ENCODE measurements at regions of chr19 and their contacts with region 1.

Region 1: GRCh38 chr19:40425450-40426287 is at the start of gene SERTAD1:
- DNase-seq: peak; percentile 100
- ATAC-seq: peak; percentile 78 to 85
- H3K4me3 ChIP-seq: peak within 1 kb of the TSS; percentile 66
- H3K27ac ChIP-seq: peak within 1 kb of the TSS; percentile 93 to 94
- H3K4me1 ChIP-seq: peaks cover 25% of the 10 kb centered on the region
- CTCF ChIP-seq: peak; percentile 100
- EP300 ChIP-seq: no peak; a peak in 1 of 5 replicates
- POLR2A ChIP-seq: peak; percentile 99
- RAD21 ChIP-seq: peak; percentile 11 to 73; a peak in 4 of 5 replicates
- polyA plus RNA-seq, gene SERTAD1: 10.0 and 10.7 TPM in 2 replicates

Region 2: GRCh38 chr19:39878398-39878797 is 547.3 kb before region 1 on chr19:
- CTCF ChIA-PET with region 1: no interaction called
- POLR2A ChIA-PET with region 1: no interaction called
- DNase-seq: no peak
- ATAC-seq: peak; percentile 11 to 17; a peak in 4 of 6 replicates
- H3K4me3 ChIP-seq: no peak overlapping the region
- H3K27ac ChIP-seq: no peak overlapping the region
- H3K4me1 ChIP-seq: no peaks in the 10 kb centered on the region
- CTCF ChIP-seq: no peak
- EP300 ChIP-seq: no peak
- POLR2A ChIP-seq: no peak
- RAD21 ChIP-seq: no peak

Region 3: GRCh38 chr19:40365613-40366401 is 59.9 kb before region 1 on chr19:
- CTCF ChIA-PET with region 1: interaction called, 15 read pairs
- POLR2A ChIA-PET with region 1: interaction called, 7 read pairs
- DNase-seq: peak; percentile 70 to 96
- ATAC-seq: peak; percentile 72 to 90
- H3K4me3 ChIP-seq: peak overlapping the region; percentile 31
- H3K27ac ChIP-seq: peak overlapping the region; percentile 30 to 78
- H3K4me1 ChIP-seq: peaks cover 16% of the 10 kb centered on the region
- CTCF ChIP-seq: no peak
- EP300 ChIP-seq: no peak
- POLR2A ChIP-seq: peak; percentile 87
- RAD21 ChIP-seq: no peak

Region 4: GRCh38 chr19:40394816-40395210 is 30.9 kb before region 1 on chr19:
- CTCF ChIA-PET with region 1: interaction called, 19 read pairs
- POLR2A ChIA-PET with region 1: interaction called, 8 read pairs
- DNase-seq: no peak
- ATAC-seq: no peak
- H3K4me3 ChIP-seq: no peak overlapping the region
- H3K27ac ChIP-seq: no peak overlapping the region
- H3K4me1 ChIP-seq: no peaks in the 10 kb centered on the region
- CTCF ChIP-seq: no peak
- EP300 ChIP-seq: no peak
- POLR2A ChIP-seq: no peak
- RAD21 ChIP-seq: no peak

Region 5: DNA sequence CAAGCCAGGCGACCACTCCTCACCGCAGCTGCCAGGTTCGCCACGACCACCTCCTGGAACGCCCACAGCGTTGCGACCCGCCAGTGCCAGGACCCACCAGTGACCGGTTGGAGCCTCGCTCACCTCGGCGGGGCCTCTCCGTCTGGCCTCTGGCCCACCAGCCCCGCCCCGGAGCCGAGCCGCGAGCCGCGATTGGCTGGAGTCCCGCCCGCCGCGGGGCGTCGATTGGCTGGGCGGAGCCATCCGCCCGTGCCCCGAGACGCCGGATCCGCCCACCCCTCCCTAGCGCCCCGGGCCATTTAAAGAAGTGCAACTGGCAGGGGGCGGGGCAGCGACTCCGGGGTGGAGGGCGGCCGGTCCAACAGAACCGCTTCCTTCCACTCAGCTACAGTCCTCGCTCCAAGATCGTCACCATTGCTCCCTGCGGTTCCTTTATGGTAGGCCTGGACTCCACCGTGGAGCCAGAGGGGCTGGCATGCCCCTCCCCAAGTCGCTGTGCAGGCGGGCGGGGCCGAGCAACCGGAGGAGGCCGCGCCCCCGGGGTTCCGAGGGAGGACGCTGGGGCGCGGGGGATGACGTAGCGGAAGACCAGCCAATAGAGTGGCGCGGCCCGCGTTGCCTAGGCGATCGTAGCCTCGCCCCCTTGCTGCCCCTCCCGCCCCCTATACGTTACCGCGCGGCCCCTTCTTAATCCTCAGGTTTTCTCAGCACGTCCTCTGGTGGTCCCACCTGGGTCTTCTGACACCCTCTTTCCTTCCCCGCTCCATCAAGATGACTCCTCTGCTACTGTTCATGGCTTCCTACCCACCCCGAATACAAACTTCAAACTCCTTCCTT is 18.7 kb after region 1 on chr19 and contains the start of gene SERTAD3:
- CTCF ChIA-PET with region 1: interaction called, 950 read pairs
- POLR2A ChIA-PET with region 1: interaction called, 208 read pairs
- DNase-seq: peak; percentile 99 to 100
- ATAC-seq: peak; percentile 74 to 84
- H3K4me3 ChIP-seq: peak within 1 kb of the TSS; percentile 80
- H3K27ac ChIP-seq: peak within 1 kb of the TSS; percentile 88 to 97
- H3K4me1 ChIP-seq: peaks cover 23% of the 10 kb centered on the region
- CTCF ChIP-seq: peak; percentile 58
- EP300 ChIP-seq: no peak
- POLR2A ChIP-seq: peak; percentile 97
- RAD21 ChIP-seq: peak; percentile 70 to 74
- polyA plus RNA-seq, gene SERTAD3: 40.2 and 41.7 TPM in 2 replicates

Region 6: GRCh38 chr19:40570313-40571004 is 144.8 kb after region 1 on chr19:
- CTCF ChIA-PET with region 1: interaction called, 6 read pairs
- POLR2A ChIA-PET with region 1: interaction called, 16 read pairs
- DNase-seq: peak; percentile 100
- ATAC-seq: peak; percentile 80 to 91
- H3K4me3 ChIP-seq: peak overlapping the region; percentile 56
- H3K27ac ChIP-seq: peak overlapping the region; percentile 84 to 89
- H3K4me1 ChIP-seq: peaks cover 17% of the 10 kb centered on the region
- CTCF ChIP-seq: peak; percentile 59
- EP300 ChIP-seq: no peak
- POLR2A ChIP-seq: peak; percentile 78
- RAD21 ChIP-seq: peak; percentile 55 to 59

Region 7: DNA sequence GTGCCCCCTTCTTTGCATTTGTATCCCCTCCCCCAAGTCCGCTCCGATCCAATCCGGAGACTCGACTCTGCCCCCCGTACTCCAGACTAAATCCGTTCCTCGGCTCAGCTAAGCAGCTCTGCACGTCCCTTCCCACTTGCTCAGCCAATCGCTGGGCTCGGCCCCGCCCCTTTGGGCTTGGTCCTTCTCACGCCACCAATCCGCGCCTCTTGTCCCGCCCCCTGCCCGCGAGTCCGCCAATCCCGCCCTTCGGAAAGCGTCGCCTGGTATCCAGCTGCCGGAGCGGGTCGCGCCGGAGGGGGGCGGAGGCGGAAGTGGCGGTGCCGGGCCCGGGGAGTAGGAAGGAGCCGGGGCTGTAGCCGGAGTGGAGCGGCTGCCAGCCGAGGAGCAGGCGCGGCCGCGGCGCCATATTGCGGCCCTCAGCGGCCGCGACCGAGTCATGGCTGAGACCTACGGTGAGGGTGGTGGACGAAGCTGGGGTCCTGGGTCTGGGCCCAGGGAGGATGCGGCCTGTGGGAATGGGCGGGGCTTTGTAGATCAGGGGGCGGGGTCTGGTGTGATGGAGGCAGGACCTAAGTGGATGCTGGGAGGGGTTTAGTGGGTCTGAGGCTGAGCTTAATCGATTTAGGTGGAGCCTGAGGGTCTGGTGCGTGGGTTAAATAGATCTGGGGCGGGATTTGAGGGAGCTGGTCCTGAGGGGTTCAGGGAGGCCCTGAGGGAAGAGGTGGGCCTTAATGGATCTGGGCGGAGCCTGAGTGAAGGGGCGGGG is 352.5 kb after region 1 on chr19 and contains the start of gene RAB4B:
- CTCF ChIA-PET with region 1: no interaction called
- POLR2A ChIA-PET with region 1: no interaction called
- DNase-seq: peak; percentile 100
- ATAC-seq: peak; percentile 86 to 93
- H3K4me3 ChIP-seq: peak within 1 kb of the TSS; percentile 52
- H3K27ac ChIP-seq: peak within 1 kb of the TSS; percentile 84 to 87
- H3K4me1 ChIP-seq: peaks cover 14% of the 10 kb centered on the region
- CTCF ChIP-seq: no peak
- EP300 ChIP-seq: no peak
- POLR2A ChIP-seq: peak; percentile 61
- RAD21 ChIP-seq: no peak
- polyA plus RNA-seq, gene RAB4B: 20.7 and 25.0 TPM in 2 replicates